Naive thymus-derived CD4-positive, alpha-beta T cell (primary cell): ENCODE measurements at regions of chr15 and their contacts with region 1.

Region 1: DNA sequence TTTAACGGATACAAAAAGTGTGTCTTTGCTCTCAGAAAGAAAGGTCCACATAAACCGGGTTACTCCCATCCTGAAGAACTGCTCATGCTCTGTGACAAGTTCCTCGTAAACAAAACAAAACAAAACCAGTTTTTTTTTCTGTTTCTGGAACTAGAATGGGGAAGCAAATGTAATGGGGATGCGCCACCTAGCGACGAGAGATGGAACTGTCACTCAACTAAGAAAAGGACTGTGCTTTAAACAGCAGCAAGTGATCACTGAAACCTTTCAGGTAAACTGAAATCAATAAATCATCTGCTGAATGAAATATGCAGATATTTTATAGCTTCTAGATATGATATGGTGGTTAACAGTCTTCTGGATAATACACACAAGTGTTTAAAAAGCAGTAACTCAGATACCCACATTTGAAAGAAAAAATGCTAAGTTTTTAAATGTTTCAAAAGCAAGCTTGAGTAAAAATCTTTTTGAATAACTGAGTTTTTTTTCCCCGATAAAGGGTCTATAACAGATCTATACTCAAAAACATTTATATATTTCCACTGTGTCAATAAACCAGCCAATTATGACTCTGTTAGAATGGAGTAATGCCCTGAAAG is 10.9 kb downstream of the TM2D3 start:
- DNase-seq: peak; percentile 40 to 75 (median 68)
- ATAC-seq: peak; percentile 84
- H3K4me3 ChIP-seq: no peak overlapping the region
- H3K4me3 Mint-ChIP-seq: peak overlapping the region in 3 of 10 donors; percentile 16 to 57 (median 27)
- H3K27ac ChIP-seq: peak overlapping the region; percentile 52
- H3K27ac Mint-ChIP-seq: peak overlapping the region in 8 of 9 donors; percentile 78 to 93 (median 85)
- H3K4me1 ChIP-seq: peaks cover 10 to 19% of the 10 kb centered on the region in 2 donors
- H3K4me1 Mint-ChIP-seq: peaks cover 18 to 43% (median 27%) of the 10 kb centered on the region in 7 donors
- H3K27me3 ChIP-seq: no peaks in the 10 kb centered on the region
- H3K27me3 Mint-ChIP-seq: no peaks in the 10 kb centered on the region

Region 2: GRCh38 chr15:101014921-101015841 is 626.1 kb before region 1 on chr15:
- CTCF ChIA-PET with region 1: no interaction called
- POLR2A ChIA-PET with region 1: no interaction called
- intact Hi-C with region 1: loop called (anchors 2 kb)
- DNase-seq: peak; percentile 19 to 77 (median 48)
- ATAC-seq: peak; percentile 53
- H3K4me3 ChIP-seq: no peak overlapping the region
- H3K4me3 Mint-ChIP-seq: no peak overlapping the region
- H3K27ac ChIP-seq: no peak overlapping the region
- H3K27ac Mint-ChIP-seq: no peak overlapping the region
- H3K4me1 ChIP-seq: no peaks in the 10 kb centered on the region
- H3K4me1 Mint-ChIP-seq: peaks cover 0 to 3% (median 0%) of the 10 kb centered on the region in 7 donors
- H3K27me3 ChIP-seq: no peaks in the 10 kb centered on the region
- H3K27me3 Mint-ChIP-seq: peaks cover 0 to 3% (median 0%) of the 10 kb centered on the region in 5 donors

Region 3: GRCh38 chr15:101088788-101089583 is 552.3 kb before region 1 on chr15:
- CTCF ChIA-PET with region 1: no interaction called
- POLR2A ChIA-PET with region 1: no interaction called
- intact Hi-C with region 1: loop called in 1 of 2 experiments (anchors 1 kb)
- DNase-seq: peak; percentile 45 to 89 (median 74)
- ATAC-seq: peak; percentile 92
- H3K4me3 ChIP-seq: no peak overlapping the region
- H3K4me3 Mint-ChIP-seq: peak overlapping the region in 2 of 10 donors; percentile 13 to 24
- H3K27ac ChIP-seq: no peak overlapping the region
- H3K27ac Mint-ChIP-seq: peak overlapping the region in 1 of 9 donors; percentile 49
- H3K4me1 ChIP-seq: no peaks in the 10 kb centered on the region
- H3K4me1 Mint-ChIP-seq: peaks cover 0 to 13% (median 0%) of the 10 kb centered on the region in 7 donors
- H3K27me3 ChIP-seq: no peaks in the 10 kb centered on the region
- H3K27me3 Mint-ChIP-seq: peaks cover 0 to 10% (median 4%) of the 10 kb centered on the region in 5 donors

Region 4: DNA sequence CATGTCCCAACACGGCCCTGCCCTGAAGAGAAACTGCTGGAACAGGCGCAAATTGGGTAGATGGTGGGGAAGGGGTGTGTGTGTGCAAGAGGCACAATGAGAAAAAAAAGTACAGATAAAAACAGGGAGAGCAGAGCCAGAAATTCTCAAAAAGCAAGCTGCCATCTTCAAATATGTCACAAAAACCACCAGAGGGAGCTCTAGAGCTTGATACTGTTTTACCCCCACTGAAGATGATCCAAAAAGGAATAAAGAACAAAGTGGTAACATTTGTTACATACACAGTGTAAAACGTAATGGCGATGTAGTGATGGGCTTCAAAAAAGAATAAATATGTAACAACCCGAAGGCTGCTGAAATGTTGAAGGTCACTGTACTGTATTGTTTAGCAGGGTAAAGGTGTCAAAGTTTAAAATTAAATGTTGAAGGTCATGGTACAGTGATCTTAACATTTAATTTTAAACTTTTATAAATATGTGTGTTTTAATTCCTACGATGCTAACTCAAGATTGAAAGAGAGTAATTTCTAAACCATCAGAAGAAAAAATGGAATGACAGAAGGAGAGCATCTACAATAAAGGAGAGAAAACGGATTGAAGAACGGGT is 352.3 kb before region 1 on chr15:
- CTCF ChIA-PET with region 1: interaction called, 16 read pairs
- POLR2A ChIA-PET with region 1: interaction called, 3 read pairs
- intact Hi-C with region 1: loop called in 1 of 2 experiments (anchors 1 kb)
- DNase-seq: peak in 7 of 9 donors; percentile 48 to 68 (median 62)
- ATAC-seq: peak; percentile 82
- H3K4me3 ChIP-seq: no peak overlapping the region
- H3K4me3 Mint-ChIP-seq: peak overlapping the region in 2 of 10 donors; percentile 20 to 25
- H3K27ac ChIP-seq: no peak overlapping the region
- H3K27ac Mint-ChIP-seq: peak overlapping the region in 8 of 9 donors; percentile 5 to 77 (median 42)
- H3K4me1 ChIP-seq: peaks cover 8 to 21% of the 10 kb centered on the region in 2 donors
- H3K4me1 Mint-ChIP-seq: peaks cover 32 to 62% (median 45%) of the 10 kb centered on the region in 7 donors
- H3K27me3 ChIP-seq: no peaks in the 10 kb centered on the region
- H3K27me3 Mint-ChIP-seq: no peaks in the 10 kb centered on the region

Region 5: DNA sequence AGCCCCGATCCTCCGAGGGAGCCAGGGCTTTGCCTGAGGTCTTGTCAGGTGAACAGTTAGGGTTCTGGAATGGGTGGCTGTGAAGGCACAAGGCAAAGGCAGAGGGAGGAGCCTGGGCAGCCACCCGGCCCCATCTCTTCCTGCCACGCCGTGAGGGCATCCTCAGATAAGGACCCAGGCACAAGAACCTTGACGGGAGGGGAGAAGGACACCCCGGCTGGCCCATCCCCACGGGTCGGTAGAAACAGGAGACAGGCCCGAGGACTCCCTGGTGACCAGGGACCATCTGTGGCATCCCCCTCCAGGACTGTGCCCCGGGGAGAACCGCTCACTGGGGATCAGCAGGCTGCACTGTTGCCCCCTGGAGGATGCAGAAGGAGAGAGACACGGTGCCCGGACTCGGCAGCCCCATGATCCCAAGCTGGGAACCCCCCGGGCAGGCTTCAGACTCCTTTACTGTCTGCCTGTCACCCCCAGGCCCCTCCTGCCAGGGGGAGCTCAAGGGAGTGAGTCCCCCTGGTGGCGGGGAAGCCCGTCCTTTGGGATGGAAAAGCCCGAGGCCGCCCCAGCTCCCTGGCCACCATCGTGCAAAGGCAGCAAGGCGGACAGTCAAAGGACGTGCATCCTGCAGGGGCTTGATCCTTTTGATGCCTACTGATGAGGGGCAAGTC is 139.4 kb before region 1 on chr15:
- CTCF ChIA-PET with region 1: no interaction called
- POLR2A ChIA-PET with region 1: no interaction called
- intact Hi-C with region 1: loop called in 1 of 2 experiments (anchors 5 kb)
- DNase-seq: peak; percentile 10 to 51 (median 31)
- ATAC-seq: peak; percentile 79
- H3K4me3 ChIP-seq: peak overlapping the region; percentile 24
- H3K4me3 Mint-ChIP-seq: peak overlapping the region in 9 of 10 donors; percentile 55 to 81 (median 73)
- H3K27ac ChIP-seq: no peak overlapping the region
- H3K27ac Mint-ChIP-seq: no peak overlapping the region
- H3K4me1 ChIP-seq: peaks cover 0 to 3% of the 10 kb centered on the region in 2 donors
- H3K4me1 Mint-ChIP-seq: peaks cover 12 to 28% (median 18%) of the 10 kb centered on the region in 7 donors
- H3K27me3 ChIP-seq: peaks cover 0 to 3% of the 10 kb centered on the region in 2 donors
- H3K27me3 Mint-ChIP-seq: peaks cover 7 to 30% (median 21%) of the 10 kb centered on the region in 5 donors

Region 6: GRCh38 chr15:101694261-101694660 is 53.0 kb after region 1 on chr15:
- CTCF ChIA-PET with region 1: no interaction called
- POLR2A ChIA-PET with region 1: no interaction called
- intact Hi-C with region 1: no loop called
- DNase-seq: no peak
- ATAC-seq: no peak
- H3K4me3 ChIP-seq: no peak overlapping the region
- H3K4me3 Mint-ChIP-seq: no peak overlapping the region
- H3K27ac ChIP-seq: no peak overlapping the region
- H3K27ac Mint-ChIP-seq: peak overlapping the region in 1 of 9 donors; percentile 13
- H3K4me1 ChIP-seq: peaks cover 0 to 18% of the 10 kb centered on the region in 2 donors
- H3K4me1 Mint-ChIP-seq: peaks cover 13 to 72% (median 39%) of the 10 kb centered on the region in 7 donors
- H3K27me3 ChIP-seq: no peaks in the 10 kb centered on the region
- H3K27me3 Mint-ChIP-seq: no peaks in the 10 kb centered on the region